B cell (primary cell): ENCODE measurements at regions of chr2 and their contacts with region 1.

Region 1: DNA sequence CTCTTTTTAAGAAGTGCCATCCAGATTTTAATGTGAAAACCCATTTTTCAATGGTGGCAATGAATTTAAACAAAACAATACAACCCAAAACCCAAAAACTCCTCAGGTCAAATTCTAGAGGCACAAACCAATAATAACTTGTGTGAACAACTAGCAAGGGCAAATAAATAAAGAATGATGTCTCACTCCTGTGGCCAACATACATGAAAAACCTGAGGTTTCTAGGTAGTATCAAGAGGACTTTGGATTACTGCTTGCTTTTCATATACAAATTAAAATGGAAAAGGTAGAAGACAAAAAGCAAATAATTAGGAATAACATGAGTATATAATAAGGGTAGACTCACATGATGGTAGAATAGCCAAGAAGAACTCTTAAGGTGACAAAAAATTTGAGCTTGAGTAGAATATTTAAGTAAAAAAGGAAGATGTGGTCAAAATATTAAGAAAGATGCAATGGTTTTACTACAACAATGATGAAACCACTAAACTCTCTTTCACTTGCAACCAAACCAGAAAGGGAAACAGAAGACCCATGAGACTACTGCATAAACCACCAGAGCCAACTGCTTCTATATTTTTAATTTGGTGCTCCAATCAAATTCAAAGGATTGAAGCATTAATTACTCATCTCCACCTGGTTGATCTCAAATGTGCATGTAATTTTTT is 53.5 kb downstream of the DARS1 start:
- DNase-seq: no peak
- ATAC-seq: no peak
- H3K4me3 ChIP-seq: no peak overlapping the region
- H3K4me3 Mint-ChIP-seq: no peak overlapping the region
- H3K27ac ChIP-seq: no peak overlapping the region
- H3K27ac Mint-ChIP-seq: no peak overlapping the region
- H3K4me1 ChIP-seq: peaks cover 0 to 2% of the 10 kb centered on the region in 2 donors
- H3K4me1 Mint-ChIP-seq: peaks cover 14% of the 10 kb centered on the region
- H3K27me3 ChIP-seq: no peaks in the 10 kb centered on the region
- H3K27me3 Mint-ChIP-seq: no peaks in the 10 kb centered on the region
- CTCF ChIP-seq: no peak

Region 2: GRCh38 chr2:135974036-135974435 is 42.1 kb after region 1 on chr2:
- CTCF ChIA-PET with region 1: no interaction called
- POLR2A ChIA-PET with region 1: no interaction called
- intact Hi-C with region 1: loop called (anchors 5 kb)
- DNase-seq: no peak
- ATAC-seq: no peak
- H3K4me3 ChIP-seq: no peak overlapping the region
- H3K4me3 Mint-ChIP-seq: no peak overlapping the region
- H3K27ac ChIP-seq: no peak overlapping the region
- H3K27ac Mint-ChIP-seq: no peak overlapping the region
- H3K4me1 ChIP-seq: no peaks in the 10 kb centered on the region
- H3K4me1 Mint-ChIP-seq: peaks cover 46% of the 10 kb centered on the region
- H3K27me3 ChIP-seq: no peaks in the 10 kb centered on the region
- H3K27me3 Mint-ChIP-seq: no peaks in the 10 kb centered on the region
- CTCF ChIP-seq: no peak